ENCODE measurements at regions of chr19 and their contacts with region 1.

Region 1: DNA sequence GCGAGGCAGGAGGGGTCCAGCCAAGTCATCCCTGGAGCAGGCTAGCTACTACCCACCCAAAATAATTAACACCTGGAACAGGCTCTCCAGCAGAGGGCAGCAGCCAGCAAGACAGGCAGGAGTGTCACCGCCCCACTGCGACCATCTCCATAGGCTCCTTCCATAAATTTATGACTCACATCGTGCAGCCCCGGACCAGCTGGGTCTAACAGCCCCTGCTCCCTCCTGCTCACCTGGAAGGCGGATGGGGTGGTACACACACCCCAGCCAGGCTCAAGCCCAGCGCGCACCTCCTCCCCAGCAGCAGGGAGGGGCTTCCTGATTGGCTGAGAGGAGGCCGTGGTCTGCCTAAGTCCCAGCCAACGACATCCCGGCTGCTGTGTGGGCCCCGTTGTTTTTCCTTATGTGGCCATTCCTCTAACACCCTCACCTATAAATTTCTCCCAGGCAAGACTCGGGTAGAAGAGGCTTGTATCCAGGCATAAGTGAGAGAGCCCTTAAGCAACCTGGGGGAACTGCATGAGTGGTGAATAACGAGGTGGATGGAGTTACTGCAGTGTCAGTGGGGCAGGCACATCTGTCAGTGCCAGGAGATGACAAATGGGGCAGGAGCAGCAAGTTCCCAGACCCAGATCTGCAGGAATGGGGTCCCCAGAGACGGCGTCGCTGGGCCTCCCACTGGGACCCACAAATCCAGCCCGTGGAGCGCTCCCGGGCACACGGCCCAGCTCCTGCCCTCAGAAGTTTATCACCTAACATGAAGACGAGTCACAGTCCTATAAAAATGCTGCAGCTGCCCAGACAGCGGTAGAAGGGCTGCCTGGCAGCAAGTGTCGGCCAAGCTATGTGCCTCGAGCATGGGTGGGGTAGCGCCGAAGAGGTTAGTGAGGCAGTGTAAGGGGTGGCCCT is 43.1 kb downstream of the CEBPG start:
- DNase-seq: peak; percentile 73 to 90 (median 88)
- H3K4me3 ChIP-seq: peak overlapping the region in 3 of 7 experiments; percentile 33 to 68 (median 46)
- H3K27ac ChIP-seq: no peak overlapping the region
- H3K4me1 ChIP-seq: peaks cover 0 to 5% (median 4%) of the 10 kb centered on the region in 4 experiments
- H3K27me3 ChIP-seq: no peaks in the 10 kb centered on the region

Region 2: GRCh38 chr19:33430674-33431277 is 14.2 kb after region 1 on chr19:
- CTCF ChIA-PET with region 1: interaction called, 14 read pairs
- POLR2A ChIA-PET with region 1: no interaction called
- DNase-seq: peak; percentile 55 to 82 (median 74)
- H3K4me3 ChIP-seq: no peak overlapping the region
- H3K27ac ChIP-seq: no peak overlapping the region
- H3K4me1 ChIP-seq: no peaks in the 10 kb centered on the region
- H3K27me3 ChIP-seq: no peaks in the 10 kb centered on the region

Measured in common myeloid progenitor, CD34-positive (primary cell).